OCI-LY7 (cell line): ENCODE measurements at regions of chr11 and their contacts with region 1.

Region 1: DNA sequence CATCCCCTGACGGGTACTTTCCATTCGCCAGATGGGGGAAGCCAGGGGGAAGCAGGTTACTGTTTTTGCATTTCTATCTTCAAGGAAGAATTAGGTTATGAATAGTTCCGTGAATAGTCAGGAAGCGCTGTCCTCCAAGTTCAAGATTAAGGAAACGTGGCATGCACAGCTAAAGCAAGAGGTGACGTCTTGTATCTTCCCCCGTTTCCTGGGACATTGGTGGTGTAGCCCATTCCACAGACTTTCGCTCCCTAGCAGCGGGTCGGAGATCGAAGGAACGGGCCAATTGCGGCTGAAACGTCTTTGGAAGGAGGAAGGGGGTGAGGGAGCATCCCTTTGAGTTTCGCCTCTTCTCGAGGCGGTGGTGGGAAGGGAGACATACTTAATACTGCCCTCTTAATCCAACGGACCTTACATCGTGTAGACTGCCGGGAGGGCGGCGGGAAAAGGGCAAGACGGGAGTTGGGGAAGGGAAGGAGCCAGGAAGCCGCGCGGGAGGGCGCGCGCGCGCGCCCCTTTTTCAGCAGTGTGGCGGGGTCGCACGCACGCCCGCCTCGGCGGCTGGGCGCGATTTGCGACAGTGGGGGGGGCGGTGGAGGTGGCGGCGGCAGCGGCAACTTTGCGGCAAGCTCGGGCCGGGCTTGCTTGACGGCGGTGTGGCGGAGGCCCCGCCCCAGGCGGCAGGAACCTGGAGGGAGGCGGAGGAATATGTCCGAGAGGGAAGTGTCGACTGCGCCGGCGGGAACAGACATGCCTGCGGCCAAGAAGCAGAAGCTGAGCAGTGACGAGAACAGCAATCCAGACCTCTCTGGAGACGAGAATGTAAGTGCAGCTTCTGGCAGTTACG is at the start of gene EED:
- DNase-seq: peak; percentile 95
- H3K4me3 ChIP-seq: peak within 1 kb of the TSS; percentile 93
- H3K27ac ChIP-seq: peak within 1 kb of the TSS; percentile 84
- H3K4me1 ChIP-seq: peaks cover 55% of the 10 kb centered on the region
- CTCF ChIP-seq: no peak
- total RNA-seq, gene EED: 25.2 and 30.4 TPM in 2 replicates

Region 2: GRCh38 chr11:85627998-85628770 is 616.6 kb before region 1 on chr11 and contains the start of gene TMEM126B:
- CTCF ChIA-PET with region 1: no interaction called
- POLR2A ChIA-PET with region 1: interaction called, 5 read pairs
- intact Hi-C with region 1: loop called (anchors 1 kb)
- DNase-seq: peak; percentile 96
- H3K4me3 ChIP-seq: peak within 1 kb of the TSS; percentile 96
- H3K27ac ChIP-seq: peak within 1 kb of the TSS; percentile 40
- H3K4me1 ChIP-seq: peaks cover 35% of the 10 kb centered on the region
- CTCF ChIP-seq: no peak
- total RNA-seq, gene TMEM126B: 45.4 and 47.4 TPM in 2 replicates

Region 3: DNA sequence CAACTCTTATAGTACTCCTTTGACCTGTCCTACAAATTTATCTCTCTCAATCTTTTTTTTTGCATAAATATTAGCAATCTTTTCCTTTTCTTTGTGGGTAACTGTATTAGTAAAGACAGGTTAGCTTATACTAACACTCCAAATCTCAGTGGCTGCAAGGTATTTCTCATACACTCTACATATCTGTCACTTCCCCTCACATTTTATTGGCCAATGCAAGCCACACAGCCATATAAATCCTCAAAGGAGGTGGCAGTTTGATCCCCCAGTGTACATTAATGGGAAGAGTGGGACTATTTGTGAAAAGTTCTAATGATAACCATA is 42.8 kb before region 1 on chr11:
- CTCF ChIA-PET with region 1: no interaction called
- POLR2A ChIA-PET with region 1: interaction called, 5 read pairs
- intact Hi-C with region 1: loop called (anchors 2 kb)
- DNase-seq: peak; percentile 37
- H3K4me3 ChIP-seq: peak overlapping the region; percentile 66
- H3K27ac ChIP-seq: peak overlapping the region; percentile 54
- H3K4me1 ChIP-seq: peaks cover 16% of the 10 kb centered on the region
- CTCF ChIP-seq: no peak

Region 4: DNA sequence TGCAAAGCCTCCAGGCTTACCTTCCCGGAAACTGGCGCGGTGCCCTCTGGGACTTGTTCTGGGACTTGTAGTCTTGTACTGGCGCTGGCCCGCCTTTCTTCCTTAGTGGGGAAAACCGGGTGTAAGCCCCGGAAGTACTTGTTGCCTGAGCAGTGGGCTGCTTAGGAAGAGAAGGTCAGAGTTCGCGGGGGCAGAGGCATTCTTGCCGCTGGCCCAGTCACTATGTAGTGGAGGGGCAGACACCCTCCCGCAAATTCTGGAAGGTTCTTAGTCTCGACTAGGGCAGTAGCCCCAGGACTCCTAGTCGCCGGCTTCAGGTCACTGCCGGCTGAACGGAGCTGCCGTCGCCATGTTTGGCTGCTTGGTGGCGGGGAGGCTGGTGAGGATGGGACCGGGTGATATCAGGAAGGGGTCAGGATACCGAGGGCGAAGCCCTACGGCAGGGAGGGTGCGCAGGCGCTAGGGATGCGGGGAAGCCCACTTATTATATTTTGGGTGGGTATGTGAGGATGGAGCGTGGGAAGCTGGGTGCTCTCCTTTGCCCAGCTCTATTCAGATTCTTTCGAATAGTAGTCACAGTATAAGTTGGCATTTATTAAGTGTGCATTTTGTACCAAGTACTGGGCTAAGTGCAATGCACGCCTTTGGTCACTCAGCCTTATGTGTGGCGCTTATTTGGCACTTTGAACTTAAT is 57.5 kb after region 1 on chr11 and contains the start of gene HIKESHI:
- CTCF ChIA-PET with region 1: no interaction called
- POLR2A ChIA-PET with region 1: interaction called, 5 read pairs
- intact Hi-C with region 1: loop called (anchors 1 kb)
- DNase-seq: peak; percentile 95
- H3K4me3 ChIP-seq: peak within 1 kb of the TSS; percentile 76
- H3K27ac ChIP-seq: peak within 1 kb of the TSS; percentile 43
- H3K4me1 ChIP-seq: peaks cover 15% of the 10 kb centered on the region
- CTCF ChIP-seq: no peak
- total RNA-seq, gene HIKESHI: 22.2 and 34.9 TPM in 2 replicates

Region 5: DNA sequence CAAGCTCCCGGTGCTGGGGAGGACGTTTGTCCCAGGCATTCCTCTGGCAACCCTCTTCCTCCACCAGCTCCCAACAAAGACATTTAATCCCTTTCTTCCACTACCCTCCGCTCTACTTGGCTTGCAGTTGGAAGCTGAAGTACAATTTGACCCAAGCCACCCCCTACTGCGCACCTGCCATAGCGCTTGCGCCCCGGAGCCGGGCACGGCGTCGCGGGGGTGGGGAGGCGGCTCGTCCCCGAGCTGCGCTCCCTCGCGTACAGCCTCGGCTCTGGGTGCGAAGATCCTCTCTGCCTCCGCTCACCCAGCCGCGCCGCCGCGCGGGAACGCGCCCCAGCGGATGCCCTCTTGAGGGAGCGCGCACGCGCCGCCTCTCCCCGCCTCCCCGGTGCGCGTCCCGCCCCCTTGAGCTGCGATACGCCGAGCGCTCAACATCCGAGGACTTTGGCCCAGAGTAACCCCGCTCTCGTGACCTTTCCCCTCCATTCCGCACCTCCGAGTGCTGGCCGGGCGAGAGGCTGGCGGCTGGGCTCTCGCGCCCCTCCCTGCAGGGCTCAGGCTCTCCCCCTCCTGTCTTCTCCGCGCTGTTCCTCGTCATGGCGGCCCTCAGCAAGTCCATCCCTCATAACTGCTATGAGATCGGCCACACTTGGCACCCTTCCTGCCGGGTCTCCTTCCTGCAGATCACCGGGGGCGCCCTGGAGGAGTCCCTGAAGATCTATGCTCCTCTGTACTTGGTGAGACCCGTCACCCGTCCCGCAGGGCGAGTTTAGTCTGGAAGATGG is 792.9 kb after region 1 on chr11 and contains the start of gene TMEM135:
- CTCF ChIA-PET with region 1: no interaction called
- POLR2A ChIA-PET with region 1: no interaction called
- intact Hi-C with region 1: loop called (anchors 10 kb)
- DNase-seq: peak; percentile 97
- H3K4me3 ChIP-seq: peak within 1 kb of the TSS; percentile 79
- H3K27ac ChIP-seq: peak within 1 kb of the TSS; percentile 54
- H3K4me1 ChIP-seq: peaks cover 27% of the 10 kb centered on the region
- CTCF ChIP-seq: peak; percentile 23; the same call in 1 of the 2 replicates
- total RNA-seq, gene TMEM135: 9.4 and 14.5 TPM in 2 replicates